Motor neuron (in vitro differentiated cells): ENCODE measurements at regions of chr3 and their contacts with region 1.

Region 1: DNA sequence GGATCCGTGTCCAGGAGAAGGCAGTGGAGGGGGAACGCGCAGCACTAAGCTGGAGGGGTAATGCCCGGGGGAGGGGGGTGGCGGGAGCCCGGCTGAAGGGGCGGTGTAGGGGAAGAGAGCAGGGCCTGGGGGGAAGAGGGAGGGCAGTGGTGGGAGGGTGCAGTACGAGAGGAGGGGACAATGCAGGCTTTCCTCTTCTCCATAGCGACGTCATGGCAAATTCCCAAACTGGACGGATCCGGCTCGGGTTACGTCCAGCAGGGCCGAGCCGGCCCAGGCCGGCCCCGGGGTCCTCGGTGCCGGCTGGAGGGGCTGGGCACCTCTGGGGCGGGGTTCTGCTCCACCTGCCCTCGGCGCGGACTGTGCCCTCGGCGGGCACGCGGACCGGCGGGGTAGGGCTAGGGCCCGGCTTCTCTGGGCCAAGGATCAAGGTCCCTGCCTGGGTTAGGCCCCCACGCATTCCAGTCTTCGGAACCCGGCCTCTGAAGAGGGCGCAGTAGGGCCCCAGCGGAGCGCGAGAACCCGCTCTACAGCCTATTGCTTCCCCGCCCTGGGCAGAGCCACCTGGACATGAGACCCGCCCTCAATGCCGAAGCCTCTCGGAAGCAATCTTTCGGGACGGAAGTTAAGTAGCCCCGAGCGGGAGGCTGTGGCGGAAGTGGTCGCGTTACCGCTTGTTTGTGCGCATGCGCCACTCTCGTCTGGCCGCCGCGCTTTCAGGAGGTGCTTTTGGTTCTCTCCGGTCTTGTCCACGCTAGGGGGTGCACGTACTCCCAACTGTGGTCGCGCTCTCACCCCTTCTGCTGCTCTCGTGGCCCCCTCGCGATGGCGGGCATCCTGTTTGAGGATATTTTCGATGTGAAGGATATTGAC is 1.4 kb downstream of the POLR2H start:
- ATAC-seq: peak; percentile 62 to 81 (median 78)
- H3K4me3 ChIP-seq: peak overlapping the region; percentile 56 to 78 (median 67)
- H3K27ac ChIP-seq: peak overlapping the region; percentile 99 to 100
- H3K4me1 ChIP-seq: peaks cover 23 to 30% of the 10 kb centered on the region in 2 donors

Region 2: GRCh38 chr3:184126006-184126405 is 236.9 kb before region 1 on chr3:
- in situ Hi-C with region 1: no loop called
- ATAC-seq: no peak
- H3K4me3 ChIP-seq: no peak overlapping the region
- H3K27ac ChIP-seq: no peak overlapping the region
- H3K4me1 ChIP-seq: no peaks in the 10 kb centered on the region

Region 3: GRCh38 chr3:184757022-184757651 is 394.2 kb after region 1 on chr3:
- in situ Hi-C with region 1: loop called in 1 of 9 experiments (anchors 25 kb)
- ATAC-seq: peak; percentile 70 to 91 (median 81)
- H3K4me3 ChIP-seq: no peak overlapping the region
- H3K27ac ChIP-seq: peak overlapping the region; percentile 62 to 67
- H3K4me1 ChIP-seq: peaks cover 30 to 34% of the 10 kb centered on the region in 2 donors

Region 4: DNA sequence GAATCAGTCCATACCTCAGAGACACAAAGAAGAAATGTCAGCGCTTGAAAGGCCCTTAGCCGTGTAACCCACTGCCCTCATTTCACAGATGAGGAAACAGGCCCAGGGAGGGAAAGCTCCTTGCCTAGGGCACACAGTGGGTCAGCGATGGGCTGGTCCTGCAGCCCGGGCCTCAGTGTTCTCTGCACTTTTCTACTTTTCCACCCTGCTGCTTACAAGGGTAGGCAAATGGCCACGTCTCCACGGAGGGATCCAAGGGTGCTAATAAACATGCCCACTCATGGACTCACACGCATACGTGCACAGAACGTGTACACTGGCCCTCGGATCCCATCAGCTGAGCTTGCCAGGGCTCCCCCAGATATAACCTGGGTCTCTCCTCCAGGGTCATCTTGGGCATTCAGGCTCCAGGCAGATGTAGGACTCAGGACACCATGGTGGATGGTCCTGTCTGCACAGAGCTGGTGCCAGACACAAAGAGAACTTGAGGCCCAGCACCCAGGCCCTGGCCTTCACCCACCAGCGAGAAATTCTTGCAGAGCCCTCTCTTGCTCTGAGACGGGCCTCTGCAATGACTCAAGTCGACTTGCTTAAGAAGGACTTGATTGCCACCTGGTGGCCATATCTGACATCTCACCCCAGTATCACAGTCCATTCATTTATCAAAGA is 414.6 kb after region 1 on chr3:
- in situ Hi-C with region 1: loop called in 5 of 9 experiments (anchors 25 kb)
- ATAC-seq: peak; percentile 66 to 94 (median 80)
- H3K4me3 ChIP-seq: no peak overlapping the region
- H3K27ac ChIP-seq: no peak overlapping the region
- H3K4me1 ChIP-seq: peaks cover 30 to 47% of the 10 kb centered on the region in 2 donors